ENCODE measurements at regions of chr14 and their contacts with region 1.

Region 1: GRCh38 chr14:69260861-69261564 is 1.1 kb downstream of the GALNT16 start:
- DNase-seq: peak in 1 of 2 donors; percentile 67
- ATAC-seq: peak; percentile 59 to 82 (median 77)
- H3K4me3 ChIP-seq: peak overlapping the region; percentile 33 to 87 (median 72)
- H3K27ac ChIP-seq: peak overlapping the region; percentile 47 to 86 (median 81)
- H3K4me1 ChIP-seq: peaks cover 6 to 69% (median 49%) of the 10 kb centered on the region in 9 donors
- H3K27me3 ChIP-seq: peaks cover 0 to 74% (median 19%) of the 10 kb centered on the region in 7 donors
- CTCF ChIP-seq: peak; percentile 63 to 86 (median 80)

Region 2: GRCh38 chr14:68695326-68695768 is 565.7 kb before region 1 on chr14:
- intact Hi-C with region 1: no loop called
- DNase-seq: no peak
- ATAC-seq: peak in 7 of 8 donors; percentile 18 to 87 (median 55)
- H3K4me3 ChIP-seq: no peak overlapping the region
- H3K27ac ChIP-seq: peak overlapping the region in 3 of 10 donors; percentile 24 to 83 (median 39)
- H3K4me1 ChIP-seq: peaks cover 0 to 49% (median 9%) of the 10 kb centered on the region in 9 donors
- H3K27me3 ChIP-seq: no peaks in the 10 kb centered on the region
- CTCF ChIP-seq: no peak

Region 3: DNA sequence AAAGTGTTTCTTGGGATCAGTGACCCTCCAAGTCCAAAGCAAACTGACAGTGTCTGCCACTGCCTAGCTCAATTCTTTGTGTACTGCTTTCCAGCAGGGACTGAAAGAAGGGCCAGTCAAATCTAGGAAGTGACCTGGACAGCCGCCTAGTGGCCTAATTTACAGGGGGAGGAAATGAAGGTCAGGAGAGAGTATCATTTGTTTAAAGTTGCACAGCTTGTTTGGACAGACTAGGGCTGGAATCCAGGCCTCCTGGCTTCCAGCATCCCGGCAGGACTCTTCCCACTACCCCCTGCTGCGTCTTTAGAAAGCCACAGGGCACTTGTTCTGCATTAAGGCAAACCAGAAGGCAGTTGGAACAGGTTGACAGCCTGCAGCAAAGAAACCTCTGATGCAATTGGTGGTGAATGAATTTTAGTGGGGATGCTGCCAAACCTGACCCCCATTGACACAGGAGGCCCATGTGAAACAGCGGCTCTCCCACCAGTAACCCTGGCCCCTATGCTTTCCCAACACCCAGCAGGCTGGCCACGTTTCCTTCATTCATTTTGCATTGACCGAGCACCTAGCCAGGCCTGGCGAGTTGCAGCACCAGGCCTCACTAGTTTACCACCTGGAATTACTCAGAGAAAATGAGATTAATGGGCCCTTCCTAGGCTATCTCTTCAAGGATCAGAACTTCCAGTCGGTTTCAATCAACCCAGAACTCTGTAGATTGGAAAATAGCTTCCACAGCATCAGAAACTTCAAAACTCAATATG is 27.2 kb after region 1 on chr14:
- intact Hi-C with region 1: loop called in 2 of 10 experiments (anchors 2 kb)
- DNase-seq: peak in 1 of 2 donors; percentile 65
- ATAC-seq: peak; percentile 39 to 70 (median 50)
- H3K4me3 ChIP-seq: no peak overlapping the region
- H3K27ac ChIP-seq: peak overlapping the region in 9 of 10 donors; percentile 4 to 77 (median 61)
- H3K4me1 ChIP-seq: peaks cover 17 to 73% (median 52%) of the 10 kb centered on the region in 9 donors
- H3K27me3 ChIP-seq: no peaks in the 10 kb centered on the region
- CTCF ChIP-seq: peak in 8 of 9 donors; percentile 19 to 61 (median 50)

Region 4: DNA sequence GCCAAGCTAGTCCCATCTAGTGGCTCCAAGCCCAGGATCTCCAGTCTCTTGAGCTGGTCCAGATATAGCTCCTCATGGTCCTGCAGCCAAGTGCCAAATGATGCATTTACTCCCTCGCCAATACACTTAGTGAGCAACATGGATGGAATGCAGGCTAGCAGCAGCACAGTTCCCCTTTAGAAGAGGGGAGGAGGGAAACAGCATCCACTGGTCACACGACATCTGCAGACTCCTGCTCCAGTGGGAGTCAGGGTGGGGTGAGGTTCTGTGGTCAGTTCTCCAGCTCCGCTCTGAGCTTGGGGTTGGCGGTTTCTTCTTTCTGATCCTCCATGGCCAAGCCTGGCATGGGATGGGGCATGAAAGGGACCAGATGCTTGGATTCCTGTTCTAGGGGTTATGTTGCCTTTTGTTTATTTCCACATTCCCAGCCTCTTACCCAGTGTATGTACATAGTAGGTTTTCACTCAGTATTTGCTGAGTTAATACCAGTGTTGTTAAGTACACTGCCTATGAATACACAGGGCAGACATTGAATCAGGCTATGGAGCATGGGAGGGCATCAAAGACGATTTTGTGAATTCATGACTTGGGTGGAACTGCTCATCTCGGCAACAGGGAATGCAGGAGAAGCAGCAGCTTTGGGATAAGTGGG is 56.2 kb after region 1 on chr14:
- intact Hi-C with region 1: loop called in 2 of 10 experiments (anchors 2 to 10 kb)
- DNase-seq: peak; percentile 40 to 84
- ATAC-seq: peak; percentile 92 to 96 (median 93)
- H3K4me3 ChIP-seq: no peak overlapping the region
- H3K27ac ChIP-seq: peak overlapping the region; percentile 27 to 86 (median 73)
- H3K4me1 ChIP-seq: peaks cover 10 to 47% (median 34%) of the 10 kb centered on the region in 9 donors
- H3K27me3 ChIP-seq: no peaks in the 10 kb centered on the region
- CTCF ChIP-seq: no peak

Region 5: DNA sequence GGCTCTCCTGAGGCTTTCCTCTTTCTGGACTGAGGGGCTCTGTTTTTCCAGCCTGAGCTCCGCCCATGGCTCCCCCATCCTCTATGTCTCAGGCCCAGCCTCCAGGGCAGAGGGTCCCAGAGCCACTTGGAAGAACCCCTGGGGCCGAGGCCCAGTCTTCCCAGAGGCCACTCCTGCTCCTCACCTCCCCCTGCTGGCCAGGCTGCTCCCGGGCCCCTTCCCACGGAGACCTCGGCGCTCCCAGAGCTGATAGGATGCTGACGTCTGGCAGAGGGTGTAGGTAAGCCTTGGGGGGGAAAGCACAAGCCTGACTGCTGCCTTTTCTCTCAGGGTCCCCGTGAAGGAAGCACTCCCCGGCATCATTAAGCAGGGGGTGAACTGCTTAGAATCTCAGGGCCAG is 85.7 kb after region 1 on chr14:
- intact Hi-C with region 1: loop called in 3 of 10 experiments (anchors 5 to 10 kb)
- DNase-seq: peak; percentile 24 to 57
- ATAC-seq: peak in 3 of 8 donors; percentile 32 to 63 (median 38)
- H3K4me3 ChIP-seq: no peak overlapping the region
- H3K27ac ChIP-seq: no peak overlapping the region
- H3K4me1 ChIP-seq: peaks cover 0 to 12% (median 8%) of the 10 kb centered on the region in 9 donors
- H3K27me3 ChIP-seq: no peaks in the 10 kb centered on the region
- CTCF ChIP-seq: peak in 7 of 9 donors; percentile 50 to 66 (median 53)

Region 6: DNA sequence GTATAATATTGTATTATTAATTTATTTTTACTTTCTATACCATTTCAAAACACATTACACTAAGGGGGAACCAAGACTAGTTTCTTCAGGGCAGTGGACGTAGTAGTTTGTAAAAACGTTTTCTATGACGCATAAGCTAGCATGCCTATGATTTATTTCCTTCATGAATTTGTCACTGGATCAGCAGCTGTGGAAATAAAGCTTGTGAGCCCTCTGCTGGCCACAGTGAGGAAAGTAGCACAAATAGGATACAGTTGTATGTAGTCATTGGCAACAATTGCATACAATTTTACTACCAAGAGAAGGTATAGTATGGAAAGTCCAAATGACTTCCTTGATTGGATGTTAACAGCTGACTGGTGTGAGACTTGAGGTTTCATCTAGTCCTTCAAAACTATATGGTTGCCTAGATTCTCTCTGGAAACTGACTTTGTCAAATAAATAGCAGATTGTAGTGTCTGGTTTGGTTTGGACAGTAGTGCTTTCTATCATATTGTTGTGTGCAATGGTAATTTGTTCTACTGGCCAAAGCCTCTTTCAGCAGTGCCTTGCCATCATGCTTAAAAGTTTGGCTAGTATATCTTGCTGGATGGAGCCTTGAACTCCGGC is 199.2 kb after region 1 on chr14:
- intact Hi-C with region 1: loop called in 1 of 10 experiments (anchors 5 kb)
- DNase-seq: peak in 1 of 2 donors; percentile 72
- ATAC-seq: peak; percentile 73 to 92 (median 85)
- H3K4me3 ChIP-seq: no peak overlapping the region
- H3K27ac ChIP-seq: no peak overlapping the region
- H3K4me1 ChIP-seq: peaks cover 0 to 8% (median 0%) of the 10 kb centered on the region in 9 donors
- H3K27me3 ChIP-seq: no peaks in the 10 kb centered on the region
- CTCF ChIP-seq: peak in 8 of 9 donors; percentile 63 to 83 (median 79)

Measured in heart right ventricle (tissue), 16 donors.